ENCODE measurements at regions of chr7 and their contacts with region 1.

Region 1: GRCh38 chr7:108569381-108570145 is at the starts of genes DNAJB9 and THAP5:
- DNase-seq: peak; percentile 99 to 100
- H3K4me3 ChIP-seq: peak within 1 kb of the TSS; percentile 66 to 90
- H3K27ac ChIP-seq: peak within 1 kb of the TSS; percentile 96 to 97
- H3K4me1 ChIP-seq: peaks cover 0 to 36% (median 9%) of the 10 kb centered on the region in 4 donors
- H3K27me3 ChIP-seq: no peaks in the 10 kb centered on the region
- CTCF ChIP-seq: no peak

Region 2: GRCh38 chr7:108327353-108327752 is 242.2 kb before region 1 on chr7:
- intact Hi-C with region 1: no loop called
- DNase-seq: no peak
- H3K4me3 ChIP-seq: no peak overlapping the region
- H3K27ac ChIP-seq: no peak overlapping the region
- H3K4me1 ChIP-seq: no peaks in the 10 kb centered on the region
- H3K27me3 ChIP-seq: no peaks in the 10 kb centered on the region
- CTCF ChIP-seq: no peak

Region 3: GRCh38 chr7:108525985-108526767 is 43.4 kb before region 1 on chr7 and contains the start of gene PNPLA8:
- intact Hi-C with region 1: loop called (anchors 2 kb)
- DNase-seq: peak; percentile 100
- H3K4me3 ChIP-seq: peak within 1 kb of the TSS; percentile 65 to 71
- H3K27ac ChIP-seq: peak within 1 kb of the TSS; percentile 84 to 92
- H3K4me1 ChIP-seq: peaks cover 9 to 39% (median 29%) of the 10 kb centered on the region in 4 donors
- H3K27me3 ChIP-seq: no peaks in the 10 kb centered on the region
- CTCF ChIP-seq: no peak

Region 4: DNA sequence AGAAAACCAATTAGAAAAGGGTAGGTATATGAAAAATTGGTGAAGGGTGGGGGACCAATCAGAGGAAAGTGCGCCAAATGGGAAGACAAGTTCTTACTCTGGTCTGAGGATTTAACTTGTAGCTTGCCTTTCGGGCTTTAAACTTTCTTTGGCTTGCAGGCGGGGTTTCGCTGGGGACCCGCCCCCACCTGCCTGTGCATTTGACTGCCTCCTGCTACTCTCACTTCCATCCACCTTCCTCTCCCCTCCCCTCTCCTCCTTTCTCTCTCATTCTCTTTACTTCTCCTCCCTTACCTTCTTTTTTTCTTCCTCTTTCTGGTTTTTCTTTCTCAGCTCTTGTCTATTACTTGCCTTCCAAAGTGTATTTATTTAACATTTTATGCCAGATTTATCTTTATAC is 278.9 kb after region 1 on chr7:
- intact Hi-C with region 1: no loop called
- DNase-seq: no peak
- H3K4me3 ChIP-seq: no peak overlapping the region
- H3K27ac ChIP-seq: no peak overlapping the region
- H3K4me1 ChIP-seq: no peaks in the 10 kb centered on the region
- H3K27me3 ChIP-seq: no peaks in the 10 kb centered on the region
- CTCF ChIP-seq: no peak